BJ (cell line): ENCODE measurements at regions of chr5 and their contacts with region 1.

Region 1: GRCh38 chr5:126776497-126777256 is at the start of gene LMNB1:
- DNase-seq: peak; percentile 67
- H3K4me3 ChIP-seq: peak within 1 kb of the TSS; percentile 97
- H3K27me3 ChIP-seq: no peaks in the 10 kb centered on the region
- CTCF ChIP-seq: peak; percentile 24; the same call in 1 of the 2 replicates
- polyA plus RNA-seq, gene LMNB1: 11.2 and 12.0 TPM in 2 replicates

Region 2: GRCh38 chr5:126624534-126624933 is 152.1 kb before region 1 on chr5:
- CTCF ChIA-PET with region 1: no interaction called
- POLR2A ChIA-PET with region 1: no interaction called
- DNase-seq: peak; percentile 82
- H3K4me3 ChIP-seq: no peak overlapping the region
- H3K27me3 ChIP-seq: no peaks in the 10 kb centered on the region
- CTCF ChIP-seq: no peak

Region 3: GRCh38 chr5:126656396-126657007 is 120.2 kb before region 1 on chr5:
- CTCF ChIA-PET with region 1: interaction called, 18 read pairs
- POLR2A ChIA-PET with region 1: no interaction called
- DNase-seq: no peak
- H3K4me3 ChIP-seq: no peak overlapping the region
- H3K27me3 ChIP-seq: no peaks in the 10 kb centered on the region
- CTCF ChIP-seq: peak; percentile 89

Region 4: DNA sequence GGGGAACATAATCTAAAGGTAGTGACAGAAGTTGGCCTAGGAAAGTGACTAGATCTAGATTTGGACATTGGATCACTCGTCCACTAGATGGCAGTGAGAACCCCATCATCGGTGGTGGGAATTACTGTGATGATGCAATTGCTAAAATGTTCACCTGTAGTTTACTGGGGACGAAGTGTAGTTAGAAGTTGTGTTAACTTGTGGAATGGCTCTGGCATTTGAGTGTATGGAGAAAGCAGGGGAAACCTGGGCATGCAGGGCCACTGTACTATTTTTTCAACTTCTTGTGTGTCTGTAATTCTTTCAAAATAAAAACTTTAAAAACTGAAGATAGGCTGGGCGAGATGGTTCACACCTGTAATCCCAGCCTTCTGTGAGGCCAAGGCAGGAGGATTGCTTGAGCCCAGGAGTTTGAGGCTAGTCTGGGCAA is 100.5 kb before region 1 on chr5:
- CTCF ChIA-PET with region 1: interaction called, 153 read pairs
- POLR2A ChIA-PET with region 1: no interaction called
- DNase-seq: no peak
- H3K4me3 ChIP-seq: no peak overlapping the region
- H3K27me3 ChIP-seq: no peaks in the 10 kb centered on the region
- CTCF ChIP-seq: peak; percentile 78

Region 5: DNA sequence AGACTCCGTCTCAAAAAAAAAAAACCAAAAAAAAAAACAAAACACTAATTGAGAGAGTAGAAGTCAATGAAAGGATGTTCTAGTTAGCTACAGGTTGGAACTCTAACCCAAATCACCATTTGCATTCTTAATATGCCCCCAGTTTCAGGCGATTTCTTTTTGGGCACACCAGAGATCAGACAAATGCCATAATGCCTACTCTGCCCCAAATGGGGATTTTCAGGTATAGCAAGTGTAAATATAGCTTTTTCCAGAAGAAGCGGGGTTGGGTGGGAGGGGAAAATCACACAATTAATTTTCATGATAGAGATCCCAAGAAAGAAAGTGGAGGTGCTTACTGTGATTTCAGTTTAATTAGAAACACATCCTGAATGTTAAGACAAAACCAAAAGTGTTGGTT is 25.0 kb before region 1 on chr5:
- CTCF ChIA-PET with region 1: no interaction called
- POLR2A ChIA-PET with region 1: no interaction called
- DNase-seq: no peak
- H3K4me3 ChIP-seq: no peak overlapping the region
- H3K27me3 ChIP-seq: no peaks in the 10 kb centered on the region
- CTCF ChIP-seq: no peak

Region 6: GRCh38 chr5:126794157-126794828 is 17.6 kb after region 1 on chr5:
- CTCF ChIA-PET with region 1: interaction called, 14 read pairs
- POLR2A ChIA-PET with region 1: interaction called, 6 read pairs
- DNase-seq: no peak
- H3K4me3 ChIP-seq: no peak overlapping the region
- H3K27me3 ChIP-seq: no peaks in the 10 kb centered on the region
- CTCF ChIP-seq: no peak

Region 7: DNA sequence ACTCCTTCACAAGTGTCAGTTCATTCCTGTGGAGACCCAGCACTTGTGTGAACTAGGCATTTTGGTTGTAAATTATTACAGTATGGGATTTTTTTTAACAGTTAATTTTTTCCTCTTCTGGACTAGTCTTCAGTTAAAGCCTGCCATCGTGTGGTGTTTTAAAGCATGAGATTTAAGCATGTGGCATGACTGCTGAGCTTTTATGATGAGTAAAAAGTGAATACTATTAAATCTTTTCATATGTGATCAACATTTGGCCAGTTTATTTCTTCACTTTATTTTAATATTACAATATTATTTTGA is 25.3 kb after region 1 on chr5:
- CTCF ChIA-PET with region 1: interaction called, 31 read pairs
- POLR2A ChIA-PET with region 1: interaction called, 3 read pairs
- DNase-seq: no peak
- H3K4me3 ChIP-seq: no peak overlapping the region
- H3K27me3 ChIP-seq: no peaks in the 10 kb centered on the region
- CTCF ChIP-seq: peak; percentile 57

Region 8: DNA sequence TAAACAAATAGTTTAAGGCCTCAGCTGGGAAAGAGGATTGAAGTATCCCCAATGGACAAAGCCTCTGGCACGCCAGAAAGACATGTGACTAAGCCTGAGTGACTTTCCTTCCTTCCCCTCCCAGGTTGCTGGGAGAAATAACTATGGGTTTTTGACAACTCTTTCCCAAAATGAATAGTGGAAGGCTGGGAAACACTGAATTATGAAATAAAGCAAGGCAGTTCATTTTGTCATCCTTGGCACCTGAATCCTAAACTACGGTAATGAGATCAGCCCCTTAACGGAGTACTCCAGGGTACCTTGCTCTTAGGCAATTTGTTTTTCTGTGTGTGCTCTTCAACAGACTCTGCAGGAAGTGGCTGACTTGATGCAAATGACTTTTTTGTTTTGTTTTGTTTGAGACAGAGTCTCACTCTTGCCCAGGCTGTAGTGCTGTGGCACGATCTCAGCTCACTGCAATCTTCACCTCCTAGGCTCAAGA is 75.5 kb after region 1 on chr5:
- CTCF ChIA-PET with region 1: no interaction called
- POLR2A ChIA-PET with region 1: no interaction called
- DNase-seq: no peak
- H3K4me3 ChIP-seq: no peak overlapping the region
- H3K27me3 ChIP-seq: no peaks in the 10 kb centered on the region
- CTCF ChIP-seq: no peak